SK-N-SH (cell line): ENCODE measurements at regions of chr3 and their contacts with region 1.

Region 1: GRCh38 chr3:32947789-32948238 is 3.6 kb upstream of the CCR4 start:
- DNase-seq: peak; percentile 58
- H3K4me3 ChIP-seq: no peak overlapping the region; a peak in 1 of 4 replicates
- H3K27ac ChIP-seq: no peak overlapping the region
- H3K4me1 ChIP-seq: no peaks in the 10 kb centered on the region
- H3K27me3 ChIP-seq: no peaks in the 10 kb centered on the region
- CTCF ChIP-seq: peak; percentile 78
- EP300 ChIP-seq: no peak
- RAD21 ChIP-seq: peak; percentile 89

Region 2: DNA sequence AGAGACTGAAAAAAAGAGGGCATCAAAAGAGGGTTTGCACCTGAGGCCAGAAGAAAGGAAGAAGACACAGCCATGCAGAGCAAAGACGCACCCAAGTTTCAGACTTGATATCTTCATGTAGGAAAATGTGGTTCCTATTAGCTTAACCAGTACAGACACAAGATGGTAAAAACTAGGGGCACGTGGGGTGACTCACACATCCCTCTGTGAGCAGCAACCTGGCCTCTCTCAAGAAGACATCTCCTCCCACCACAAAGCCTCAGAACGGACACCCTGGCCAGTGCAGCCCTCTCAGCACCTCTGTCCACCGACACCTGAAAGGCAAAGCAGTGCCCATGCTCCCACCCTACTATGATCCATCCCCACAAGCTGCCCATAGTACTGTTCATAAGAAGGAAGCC is 115.8 kb after region 1 on chr3:
- CTCF ChIA-PET with region 1: interaction called, 32 read pairs
- POLR2A ChIA-PET with region 1: no interaction called
- DNase-seq: no peak
- H3K4me3 ChIP-seq: no peak overlapping the region
- H3K27ac ChIP-seq: no peak overlapping the region
- H3K4me1 ChIP-seq: peaks cover 4 to 6% of the 10 kb centered on the region in 2 experiments; a peak in 1 of 4 replicates
- H3K27me3 ChIP-seq: no peaks in the 10 kb centered on the region
- CTCF ChIP-seq: no peak
- EP300 ChIP-seq: peak in 1 of 2 experiments; percentile 33; a peak in 1 of 4 replicates
- RAD21 ChIP-seq: no peak